ENCODE measurements at regions of chr7 and their contacts with region 1.

Region 1: DNA sequence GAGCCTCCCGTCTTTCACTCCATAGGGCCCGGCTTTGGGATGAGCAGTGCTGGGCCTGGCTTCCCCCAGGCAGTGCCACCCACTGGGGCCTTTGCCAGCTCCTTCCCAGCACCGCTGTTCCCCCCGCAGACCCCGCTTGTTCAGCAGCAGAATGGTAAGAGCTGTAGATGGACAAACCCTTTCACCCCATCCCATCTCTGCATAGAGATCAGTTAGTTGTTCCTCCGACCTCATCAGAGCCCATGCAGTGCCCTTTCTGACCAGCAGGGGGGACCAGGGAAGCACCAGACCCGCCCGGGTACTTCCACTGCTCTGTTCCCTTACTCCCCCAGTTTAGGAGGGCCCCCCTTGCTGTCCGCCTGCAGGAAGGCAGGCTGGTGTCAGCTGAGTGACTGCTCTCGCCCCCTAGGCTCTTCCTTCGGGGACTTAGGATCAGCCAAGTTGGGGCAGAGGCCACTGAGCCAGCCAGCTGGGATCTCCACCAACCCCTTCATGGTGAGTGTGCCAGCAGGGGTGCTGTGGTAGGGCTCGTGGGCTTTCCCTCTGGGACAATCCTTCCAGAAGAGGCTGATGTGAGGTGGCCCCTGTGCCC is 9.8 kb downstream of the SAP25 start:
- DNase-seq: peak; percentile 53
- H3K4me3 ChIP-seq: no peak overlapping the region
- H3K27ac ChIP-seq: no peak overlapping the region
- H3K4me1 ChIP-seq: peaks cover 2% of the 10 kb centered on the region
- H3K27me3 ChIP-seq: no peaks in the 10 kb centered on the region
- CTCF ChIP-seq: peak; percentile 90 to 94
- POLR2A ChIP-seq: no peak

Region 2: DNA sequence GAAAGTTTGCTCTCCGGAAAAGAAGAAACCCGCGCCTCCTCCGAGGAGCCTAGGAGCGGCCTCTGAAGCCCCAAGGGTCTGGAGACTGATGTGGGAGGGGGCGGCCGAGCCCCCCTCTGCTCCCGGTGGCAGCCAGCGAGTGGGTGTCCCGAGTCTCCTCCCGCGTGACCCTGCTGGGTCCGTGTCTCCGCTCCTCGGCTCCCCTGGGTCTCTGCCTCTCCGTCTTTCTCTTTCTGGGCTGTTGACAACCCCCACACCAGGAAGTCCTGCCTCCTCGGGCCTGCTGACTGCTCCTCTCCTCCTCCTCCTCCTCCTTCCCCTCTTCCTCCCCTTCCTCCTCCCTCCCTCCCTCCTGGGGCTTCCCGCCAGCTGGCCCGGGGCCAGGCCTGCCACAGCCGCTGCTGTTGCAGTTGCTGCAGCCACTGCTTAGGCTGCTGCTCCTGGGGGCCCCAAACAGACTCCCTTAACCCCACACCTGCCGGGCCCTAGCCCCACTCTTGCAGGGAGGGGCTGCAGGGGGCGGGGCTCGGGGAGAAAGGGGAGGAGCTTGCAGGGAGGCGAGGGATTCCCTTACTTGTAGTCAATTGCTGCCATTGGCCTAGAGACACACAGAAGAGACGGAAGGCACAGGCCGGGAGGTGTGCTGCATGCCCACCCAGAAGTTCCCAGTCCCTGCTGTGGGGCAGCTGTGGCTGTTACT is 84.8 kb before region 1 on chr7 and contains the start of gene TSC22D4:
- CTCF ChIA-PET with region 1: interaction called, 70 read pairs
- POLR2A ChIA-PET with region 1: interaction called, 3 read pairs
- dilution Hi-C with region 1: no loop called
- intact Hi-C with region 1: loop called (anchors 1 kb)
- DNase-seq: peak; percentile 90
- H3K4me3 ChIP-seq: peak within 1 kb of the TSS; percentile 91 to 99 (median 91)
- H3K27ac ChIP-seq: peak within 1 kb of the TSS; percentile 35
- H3K4me1 ChIP-seq: peaks cover 27% of the 10 kb centered on the region
- H3K27me3 ChIP-seq: no peaks in the 10 kb centered on the region
- CTCF ChIP-seq: no peak
- POLR2A ChIP-seq: peak; percentile 94
- total RNA-seq, gene TSC22D4: 66.3 and 84.4 TPM in 2 replicates

Region 3: GRCh38 chr7:100493476-100494264 is 70.2 kb before region 1 on chr7:
- CTCF ChIA-PET with region 1: interaction called, 38 read pairs
- POLR2A ChIA-PET with region 1: interaction called, 3 read pairs
- dilution Hi-C with region 1: no loop called
- intact Hi-C with region 1: no loop called
- DNase-seq: peak; percentile 46
- H3K4me3 ChIP-seq: peak overlapping the region in 2 of 3 experiments; percentile 7 to 34
- H3K27ac ChIP-seq: no peak overlapping the region
- H3K4me1 ChIP-seq: peaks cover 7% of the 10 kb centered on the region
- H3K27me3 ChIP-seq: no peaks in the 10 kb centered on the region
- CTCF ChIP-seq: peak in 1 of 2 donors; percentile 2
- POLR2A ChIP-seq: no peak

Region 4: GRCh38 chr7:100538654-100539435 is 25.1 kb before region 1 on chr7 and contains the start of gene AGFG2:
- CTCF ChIA-PET with region 1: interaction called, 27 read pairs
- POLR2A ChIA-PET with region 1: interaction called, 4 read pairs
- dilution Hi-C with region 1: no loop called
- intact Hi-C with region 1: loop called (anchors 1 kb)
- DNase-seq: peak; percentile 100
- H3K4me3 ChIP-seq: peak within 1 kb of the TSS; percentile 43 to 96 (median 45)
- H3K27ac ChIP-seq: peak within 1 kb of the TSS; percentile 0
- H3K4me1 ChIP-seq: peaks cover 13% of the 10 kb centered on the region
- H3K27me3 ChIP-seq: no peaks in the 10 kb centered on the region
- CTCF ChIP-seq: no peak
- POLR2A ChIP-seq: peak; percentile 67
- total RNA-seq, gene AGFG2: 36.3 and 44.6 TPM in 2 replicates

Region 5: GRCh38 chr7:100604028-100604975 is 40.4 kb after region 1 on chr7:
- CTCF ChIA-PET with region 1: no interaction called
- POLR2A ChIA-PET with region 1: no interaction called
- dilution Hi-C with region 1: no loop called
- intact Hi-C with region 1: no loop called
- DNase-seq: peak; percentile 43
- H3K4me3 ChIP-seq: peak overlapping the region; percentile 44 to 65 (median 54)
- H3K27ac ChIP-seq: no peak overlapping the region
- H3K4me1 ChIP-seq: peaks cover 25% of the 10 kb centered on the region
- H3K27me3 ChIP-seq: no peaks in the 10 kb centered on the region
- CTCF ChIP-seq: peak; percentile 43 to 55
- POLR2A ChIP-seq: no peak

Region 6: GRCh38 chr7:100691676-100692577 is 128.0 kb after region 1 on chr7:
- CTCF ChIA-PET with region 1: interaction called, 4 read pairs
- POLR2A ChIA-PET with region 1: no interaction called
- dilution Hi-C with region 1: no loop called
- intact Hi-C with region 1: loop called (anchors 1 kb)
- DNase-seq: peak; percentile 65
- H3K4me3 ChIP-seq: peak overlapping the region in 1 of 3 experiments; percentile 65
- H3K27ac ChIP-seq: no peak overlapping the region
- H3K4me1 ChIP-seq: peaks cover 16% of the 10 kb centered on the region
- H3K27me3 ChIP-seq: no peaks in the 10 kb centered on the region
- CTCF ChIP-seq: peak; percentile 86 to 89
- POLR2A ChIP-seq: no peak

Region 7: DNA sequence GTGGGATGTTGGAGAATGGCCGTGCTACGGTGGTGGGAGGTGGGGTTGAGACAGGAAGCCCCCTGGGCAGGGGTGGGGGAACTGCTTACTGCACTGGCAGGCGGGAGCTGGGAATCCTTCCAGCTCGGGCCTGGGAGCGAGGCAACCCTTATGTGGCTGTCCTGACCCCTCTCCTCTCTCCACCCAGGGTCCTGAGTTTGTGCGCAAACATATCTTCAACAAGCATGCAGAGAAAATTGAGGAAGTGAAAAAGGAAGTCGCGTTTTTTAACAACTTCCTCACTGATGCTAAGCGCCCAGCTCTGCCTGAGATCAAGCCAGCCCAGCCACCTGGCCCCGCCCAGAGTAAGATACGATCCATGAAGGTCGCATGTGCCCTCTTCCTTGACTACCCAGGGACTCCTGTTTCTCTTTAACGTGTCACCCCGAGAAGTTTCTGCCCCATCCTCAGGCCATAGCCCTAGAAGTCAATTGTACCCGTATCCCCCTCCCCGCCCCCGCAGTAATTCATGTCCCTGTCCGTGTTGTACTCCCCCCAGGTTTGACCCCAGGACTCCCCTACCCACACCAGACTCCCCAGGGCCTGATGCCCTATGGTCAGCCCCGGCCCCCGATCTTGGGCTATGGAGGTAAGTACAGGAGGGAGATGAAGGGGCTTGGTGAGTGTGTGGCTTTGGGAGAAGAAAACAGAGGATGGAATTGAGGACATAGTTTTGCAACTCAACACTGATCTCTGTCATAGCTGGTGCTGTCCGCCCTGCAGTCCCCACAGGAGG is 323.8 kb after region 1 on chr7:
- CTCF ChIA-PET with region 1: no interaction called
- POLR2A ChIA-PET with region 1: no interaction called
- dilution Hi-C with region 1: no loop called
- intact Hi-C with region 1: no loop called
- DNase-seq: peak; percentile 55
- H3K4me3 ChIP-seq: no peak overlapping the region
- H3K27ac ChIP-seq: no peak overlapping the region
- H3K4me1 ChIP-seq: peaks cover 40% of the 10 kb centered on the region
- H3K27me3 ChIP-seq: no peaks in the 10 kb centered on the region
- CTCF ChIP-seq: no peak
- POLR2A ChIP-seq: peak; percentile 27